ENCODE measurements at regions of chr1 and their contacts with region 1.

Region 1: GRCh38 chr1:37890378-37891014 is 31.1 kb upstream of the MTF1 start:
- DNase-seq: no peak
- H3K4me3 ChIP-seq: no peak overlapping the region
- H3K27me3 ChIP-seq: no peaks in the 10 kb centered on the region
- CTCF ChIP-seq: peak; percentile 27; the same call in 1 of the 2 replicates

Region 2: GRCh38 chr1:37537378-37537777 is 353.1 kb before region 1 on chr1:
- CTCF ChIA-PET with region 1: no interaction called
- POLR2A ChIA-PET with region 1: no interaction called
- DNase-seq: no peak
- H3K4me3 ChIP-seq: no peak overlapping the region
- H3K27me3 ChIP-seq: no peaks in the 10 kb centered on the region
- CTCF ChIP-seq: no peak

Region 3: GRCh38 chr1:37905727-37906126 is 15.2 kb after region 1 on chr1:
- CTCF ChIA-PET with region 1: interaction called, 3 read pairs
- POLR2A ChIA-PET with region 1: interaction called, 15 read pairs
- DNase-seq: no peak
- H3K4me3 ChIP-seq: no peak overlapping the region
- H3K27me3 ChIP-seq: no peaks in the 10 kb centered on the region
- CTCF ChIP-seq: no peak

Region 4: GRCh38 chr1:37919277-37919676 is 28.8 kb after region 1 on chr1:
- CTCF ChIA-PET with region 1: no interaction called
- POLR2A ChIA-PET with region 1: no interaction called
- DNase-seq: no peak
- H3K4me3 ChIP-seq: no peak overlapping the region
- H3K27me3 ChIP-seq: no peaks in the 10 kb centered on the region
- CTCF ChIP-seq: peak; percentile 48

Region 5: GRCh38 chr1:37978541-37978940 is 88.0 kb after region 1 on chr1:
- CTCF ChIA-PET with region 1: interaction called, 28 read pairs
- POLR2A ChIA-PET with region 1: no interaction called
- DNase-seq: no peak
- H3K4me3 ChIP-seq: no peak overlapping the region
- H3K27me3 ChIP-seq: no peaks in the 10 kb centered on the region
- CTCF ChIP-seq: no peak